Activated T-helper 2 cell treated with anti-CD3 and anti-CD28 coated beads, Interferon-gamma antibody, Interleukin-2, Interleukin-4, amounts not matched to agents 10 μg/mL and 5 μg/mL and 100 μg/mL, durations not matched to agents 14 hours and 24 hours and 36 hours (primary cell): ENCODE measurements at regions of chr13 and their contacts with region 1.

Region 1: GRCh38 chr13:79480954-79481684 is at the start of gene NDFIP2:
- DNase-seq: peak; percentile 90
- H3K4me3 Mint-ChIP-seq: peak within 1 kb of the TSS; percentile 87
- H3K27ac Mint-ChIP-seq: peak within 1 kb of the TSS; percentile 93
- H3K4me1 Mint-ChIP-seq: peaks cover 58% of the 10 kb centered on the region
- H3K27me3 Mint-ChIP-seq: no peaks in the 10 kb centered on the region
- total RNA-seq, gene NDFIP2: 227 and 231 TPM in 2 replicates

Region 2: DNA sequence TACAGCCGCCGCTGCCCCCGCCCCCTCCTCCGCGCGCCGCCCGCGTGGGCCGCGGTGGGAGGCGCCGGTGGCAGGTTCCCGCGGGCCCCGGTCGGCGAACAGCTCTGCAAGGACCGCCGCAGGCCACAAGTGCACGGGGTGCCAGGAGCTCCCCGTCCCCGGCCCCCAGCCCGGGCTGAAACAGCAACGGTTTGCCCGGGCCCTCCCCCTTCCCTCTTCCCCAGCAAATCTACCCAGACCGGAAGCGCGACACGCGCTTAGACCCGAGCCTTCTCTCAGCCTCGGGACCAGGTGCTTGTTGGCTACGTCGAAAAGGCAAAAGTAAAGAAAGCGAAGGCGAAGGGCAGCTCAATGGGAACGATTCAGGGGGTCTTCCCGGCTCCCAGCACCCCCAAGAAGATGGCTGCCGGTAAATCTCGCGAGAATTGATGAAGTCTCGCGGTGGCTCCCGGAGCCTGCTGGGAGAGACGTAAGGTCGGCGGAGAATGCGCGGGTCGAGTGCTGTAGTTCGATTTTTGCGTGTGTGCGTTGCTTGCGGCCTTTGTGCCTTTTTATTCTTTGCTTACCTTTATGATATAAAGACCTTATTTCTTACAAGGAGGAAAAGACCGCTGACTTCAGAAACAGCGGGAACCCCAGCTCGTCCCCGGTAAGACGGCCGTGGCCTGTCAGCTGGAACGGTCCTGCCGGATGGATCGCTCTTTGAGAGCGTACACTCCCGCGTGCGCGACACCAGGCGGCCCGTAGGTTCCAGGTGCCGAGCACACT is 75.1 kb before region 1 on chr13 and contains the start of gene RBM26:
- intact Hi-C with region 1: loop called (anchors 1 kb)
- DNase-seq: peak; percentile 92
- H3K4me3 Mint-ChIP-seq: peak within 1 kb of the TSS; percentile 89
- H3K27ac Mint-ChIP-seq: peak within 1 kb of the TSS; percentile 97
- H3K4me1 Mint-ChIP-seq: peaks cover 42% of the 10 kb centered on the region
- H3K27me3 Mint-ChIP-seq: no peaks in the 10 kb centered on the region
- total RNA-seq, gene RBM26: 93.7 and 94.2 TPM in 2 replicates

Region 3: DNA sequence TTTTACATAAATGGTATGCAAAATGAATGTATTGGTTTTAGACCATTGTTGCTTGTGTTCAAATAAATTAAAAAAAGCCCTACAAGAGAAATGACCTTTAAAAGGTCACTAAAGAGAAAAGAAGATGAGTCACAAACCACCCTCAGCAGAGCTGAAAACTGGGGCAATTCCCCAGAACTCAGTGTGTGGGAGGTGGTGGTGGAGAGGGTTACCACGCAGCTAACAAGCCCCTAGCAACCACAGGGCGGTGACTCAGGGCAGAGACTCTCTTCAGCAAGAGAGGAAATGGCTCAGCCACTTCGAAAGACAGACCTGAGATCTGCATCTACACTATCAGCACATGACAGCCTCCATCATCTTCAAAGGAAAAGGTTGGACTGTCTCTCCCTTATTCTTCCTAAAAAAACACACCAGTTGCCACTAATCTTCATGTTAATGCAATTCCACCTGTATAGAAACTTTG is 29.6 kb before region 1 on chr13:
- intact Hi-C with region 1: loop called (anchors 1 kb)
- DNase-seq: peak; percentile 88
- H3K4me3 Mint-ChIP-seq: peak overlapping the region; percentile 75
- H3K27ac Mint-ChIP-seq: peak overlapping the region; percentile 97
- H3K4me1 Mint-ChIP-seq: peaks cover 80% of the 10 kb centered on the region
- H3K27me3 Mint-ChIP-seq: no peaks in the 10 kb centered on the region

Region 4: GRCh38 chr13:79468819-79469218 is 12.3 kb before region 1 on chr13:
- intact Hi-C with region 1: loop called (anchors 1 kb)
- DNase-seq: no peak
- H3K4me3 Mint-ChIP-seq: no peak overlapping the region
- H3K27ac Mint-ChIP-seq: peak overlapping the region; percentile 7
- H3K4me1 Mint-ChIP-seq: peaks cover 43% of the 10 kb centered on the region
- H3K27me3 Mint-ChIP-seq: no peaks in the 10 kb centered on the region

Region 5: GRCh38 chr13:79501538-79502232 is 20.6 kb after region 1 on chr13:
- intact Hi-C with region 1: loop called (anchors 1 kb)
- DNase-seq: no peak
- H3K4me3 Mint-ChIP-seq: peak overlapping the region; percentile 43
- H3K27ac Mint-ChIP-seq: peak overlapping the region; percentile 80
- H3K4me1 Mint-ChIP-seq: peaks cover 87% of the 10 kb centered on the region
- H3K27me3 Mint-ChIP-seq: no peaks in the 10 kb centered on the region

Region 6: DNA sequence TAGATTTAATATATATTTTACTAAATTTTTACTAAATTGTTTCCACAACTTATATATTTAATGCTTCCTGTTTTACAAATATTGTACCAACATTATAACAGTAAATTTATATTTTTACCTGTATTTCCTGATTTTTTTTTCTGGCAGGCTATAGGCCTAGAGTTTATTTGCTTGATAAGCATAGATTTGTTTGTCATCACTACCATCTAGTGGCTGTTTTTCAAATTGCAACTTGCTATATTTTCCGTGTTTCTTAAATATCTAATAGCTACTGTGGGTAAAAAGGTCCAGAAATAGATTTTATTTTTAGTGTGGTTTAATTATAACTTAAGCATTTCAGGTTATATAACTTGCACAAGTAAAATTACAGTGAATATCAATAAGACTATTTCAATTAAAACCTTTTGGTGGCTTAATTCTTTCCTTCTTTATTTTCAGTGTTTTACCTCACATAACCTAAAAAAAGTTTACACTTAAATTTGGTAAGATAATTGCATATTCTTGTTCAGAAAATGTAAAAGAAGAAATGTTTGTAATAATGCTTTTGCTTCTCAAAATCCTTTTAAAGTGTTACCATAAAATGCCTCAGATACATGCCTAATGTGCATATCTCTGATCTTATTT is 60.4 kb after region 1 on chr13:
- intact Hi-C with region 1: loop called (anchors 2 kb)
- DNase-seq: no peak
- H3K4me3 Mint-ChIP-seq: no peak overlapping the region
- H3K27ac Mint-ChIP-seq: no peak overlapping the region
- H3K4me1 Mint-ChIP-seq: peaks cover 43% of the 10 kb centered on the region
- H3K27me3 Mint-ChIP-seq: no peaks in the 10 kb centered on the region